Esophagus squamous epithelium (tissue), 5 donors: ENCODE measurements at regions of chr19 and their contacts with region 1.

Region 1: GRCh38 chr19:3620145-3620816 is 6.3 kb downstream of the CACTIN start:
- DNase-seq: no peak
- H3K4me3 ChIP-seq: no peak overlapping the region
- H3K27ac ChIP-seq: no peak overlapping the region
- H3K4me1 ChIP-seq: peaks cover 5 to 43% (median 12%) of the 10 kb centered on the region in 3 donors
- H3K27me3 ChIP-seq: no peaks in the 10 kb centered on the region
- CTCF ChIP-seq: no peak
- POLR2A ChIP-seq: no peak

Region 2: GRCh38 chr19:3471954-3472655 is 148.2 kb before region 1 on chr19:
- intact Hi-C with region 1: no loop called
- DNase-seq: no peak
- H3K4me3 ChIP-seq: no peak overlapping the region
- H3K27ac ChIP-seq: no peak overlapping the region
- H3K4me1 ChIP-seq: peaks cover 0 to 38% (median 0%) of the 10 kb centered on the region in 3 donors
- H3K27me3 ChIP-seq: peaks cover 0 to 21% (median 0%) of the 10 kb centered on the region in 4 donors
- CTCF ChIP-seq: peak; percentile 62 to 83 (median 72)
- POLR2A ChIP-seq: no peak

Region 3: DNA sequence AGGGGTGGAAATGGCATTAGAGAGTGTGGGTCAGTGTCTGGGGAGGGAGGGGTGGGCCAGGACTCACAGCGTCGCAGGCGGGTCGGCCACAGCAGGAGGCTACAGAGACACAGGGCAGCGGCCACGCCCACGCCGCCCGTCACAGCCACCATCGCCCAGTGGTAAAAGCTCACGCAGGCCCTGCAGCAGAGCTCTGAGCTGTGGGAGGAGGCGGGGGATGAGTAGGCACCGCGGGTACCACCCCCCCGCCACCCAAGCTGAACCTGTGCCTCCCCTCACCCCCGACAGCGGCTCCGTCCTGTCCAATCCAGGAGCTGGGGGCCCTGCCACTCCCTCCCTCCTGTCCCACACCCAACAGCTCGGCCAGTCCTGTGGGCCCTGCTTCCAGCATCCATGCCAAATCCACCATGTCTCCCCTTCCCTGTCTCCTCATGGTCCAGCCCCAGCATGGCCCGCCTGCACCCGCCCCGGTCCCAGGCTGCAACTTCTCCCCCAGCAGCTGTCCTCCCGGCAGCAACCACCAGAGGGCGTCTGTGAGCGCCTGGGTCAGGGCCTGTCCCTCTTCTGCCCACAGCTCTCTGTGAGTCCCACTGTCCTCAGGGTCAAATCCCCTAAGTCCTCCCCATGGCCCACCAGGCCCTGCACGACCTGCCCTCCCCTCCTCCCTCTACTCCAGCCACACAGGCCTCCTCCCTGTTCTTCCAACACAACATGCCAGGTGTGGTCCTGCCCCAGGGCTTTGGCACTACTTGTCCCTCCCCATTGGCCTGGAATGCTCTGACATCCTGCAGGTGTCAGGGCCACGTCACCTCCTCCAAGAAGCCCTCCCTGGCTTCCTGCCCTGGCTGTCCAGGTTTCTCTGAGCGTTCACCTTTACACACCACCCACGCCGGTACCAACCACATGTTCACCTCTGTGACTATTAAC is 75.3 kb before region 1 on chr19:
- intact Hi-C with region 1: loop called (anchors 5 kb)
- DNase-seq: no peak
- H3K4me3 ChIP-seq: no peak overlapping the region
- H3K27ac ChIP-seq: no peak overlapping the region
- H3K4me1 ChIP-seq: peaks cover 0 to 19% (median 0%) of the 10 kb centered on the region in 3 donors
- H3K27me3 ChIP-seq: no peaks in the 10 kb centered on the region
- CTCF ChIP-seq: peak; percentile 61 to 94 (median 89)
- POLR2A ChIP-seq: no peak

Region 4: GRCh38 chr19:3687774-3688706 is 67.8 kb after region 1 on chr19:
- intact Hi-C with region 1: no loop called
- DNase-seq: no peak
- H3K4me3 ChIP-seq: peak overlapping the region; percentile 7 to 56 (median 20)
- H3K27ac ChIP-seq: peak overlapping the region in 3 of 4 donors; percentile 50 to 61 (median 57)
- H3K4me1 ChIP-seq: peaks cover 17 to 52% (median 19%) of the 10 kb centered on the region in 3 donors
- H3K27me3 ChIP-seq: no peaks in the 10 kb centered on the region
- CTCF ChIP-seq: no peak
- POLR2A ChIP-seq: no peak